ENCODE measurements at regions of chr6 and their contacts with region 1.

Region 1: GRCh38 chr6:123777563-123777962 is 26.1 kb upstream of the NKAIN2 start:
- DNase-seq: peak; percentile 46
- H3K4me3 ChIP-seq: no peak overlapping the region
- H3K27ac ChIP-seq: no peak overlapping the region
- H3K4me1 ChIP-seq: no peaks in the 10 kb centered on the region
- H3K27me3 ChIP-seq: no peaks in the 10 kb centered on the region
- CTCF ChIP-seq: peak in 1 of 2 donors; percentile 14
- POLR2A ChIP-seq: no peak

Region 2: DNA sequence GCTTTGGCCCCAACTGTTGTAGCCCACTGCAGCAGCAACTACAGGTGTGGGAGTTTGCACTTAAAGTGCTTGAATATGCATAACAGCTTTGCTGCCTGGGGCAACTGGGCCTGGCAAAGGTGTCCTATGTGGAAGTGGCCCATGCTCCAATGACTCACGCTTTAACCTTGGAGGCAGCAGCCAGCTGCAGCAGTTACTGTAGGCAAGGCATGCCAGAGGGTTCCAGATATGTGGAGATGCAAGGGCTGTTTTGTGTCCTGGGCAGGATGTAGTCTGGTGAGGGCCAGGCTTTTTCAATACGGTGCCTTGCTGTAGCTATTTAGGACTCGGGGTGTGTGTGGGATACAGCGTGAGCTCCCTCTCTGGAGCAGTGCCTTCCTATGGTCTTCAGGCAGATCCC is 176.4 kb after region 1 on chr6:
- CTCF ChIA-PET with region 1: no interaction called
- POLR2A ChIA-PET with region 1: no interaction called
- dilution Hi-C with region 1: no loop called
- intact Hi-C with region 1: no loop called
- DNase-seq: no peak
- H3K4me3 ChIP-seq: no peak overlapping the region
- H3K27ac ChIP-seq: no peak overlapping the region
- H3K4me1 ChIP-seq: no peaks in the 10 kb centered on the region
- H3K27me3 ChIP-seq: no peaks in the 10 kb centered on the region
- CTCF ChIP-seq: no peak
- POLR2A ChIP-seq: no peak

Region 3: GRCh38 chr6:124854338-124854922 is 1076.9 kb after region 1 on chr6:
- CTCF ChIA-PET with region 1: interaction called, 24 read pairs
- POLR2A ChIA-PET with region 1: no interaction called
- dilution Hi-C with region 1: no loop called
- intact Hi-C with region 1: loop called (anchors 1 kb)
- DNase-seq: peak; percentile 16
- H3K4me3 ChIP-seq: no peak overlapping the region
- H3K27ac ChIP-seq: no peak overlapping the region
- H3K4me1 ChIP-seq: no peaks in the 10 kb centered on the region
- H3K27me3 ChIP-seq: peaks cover 0 to 3% of the 10 kb centered on the region in 2 experiments
- CTCF ChIP-seq: no peak
- POLR2A ChIP-seq: no peak